Tibial artery (tissue), 4 donors: ENCODE measurements at regions of chr11 and their contacts with region 1.

Region 1: GRCh38 chr11:113896156-113896879 is 8.3 kb upstream of the HTR3B start:
- DNase-seq: peak in 1 of 2 donors; percentile 37
- H3K4me3 ChIP-seq: no peak overlapping the region
- H3K27ac ChIP-seq: no peak overlapping the region
- H3K4me1 ChIP-seq: no peaks in the 10 kb centered on the region
- H3K27me3 ChIP-seq: no peaks in the 10 kb centered on the region
- CTCF ChIP-seq: peak; percentile 61 to 75

Region 2: DNA sequence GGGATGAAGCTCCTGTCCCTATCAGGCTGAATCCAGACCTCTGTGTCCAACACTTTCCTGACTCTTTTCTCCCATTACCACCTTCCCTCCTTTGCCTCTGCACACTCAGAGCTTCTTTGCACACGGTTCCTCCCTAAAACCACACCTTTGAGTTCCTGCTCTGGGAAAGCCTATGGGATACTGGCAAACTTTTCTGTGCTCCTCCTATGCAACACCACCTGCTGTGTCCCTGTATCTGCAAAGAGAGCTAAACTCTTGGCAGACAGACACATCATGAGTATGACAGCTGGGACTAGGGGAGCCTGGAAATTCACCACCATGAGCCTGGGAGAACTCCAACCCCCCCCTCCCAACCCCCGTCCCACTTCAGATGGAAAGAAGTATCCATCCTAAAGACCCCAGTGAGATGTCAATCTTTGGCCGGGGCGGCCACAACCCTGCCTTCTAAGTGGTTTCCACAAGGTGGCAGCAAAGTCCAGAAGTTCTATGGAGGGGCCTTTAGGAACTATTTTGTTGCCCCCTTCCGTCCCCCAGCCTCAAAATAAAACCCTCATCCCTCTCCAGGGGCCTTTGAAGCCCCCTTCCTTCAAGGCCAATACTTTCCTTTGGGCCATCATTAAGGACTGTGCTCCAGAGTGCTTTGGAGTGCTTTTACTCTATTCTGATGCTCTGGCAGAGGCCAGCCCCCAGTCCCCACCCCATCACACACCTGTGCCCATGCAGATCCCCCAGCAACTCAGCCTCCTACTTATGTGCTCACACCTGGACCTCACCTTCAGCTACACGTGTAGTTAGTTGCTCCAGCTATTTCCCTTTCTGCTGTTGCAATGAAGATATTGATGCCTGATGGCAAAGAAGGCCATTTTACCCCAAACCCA is 98.0 kb after region 1 on chr11:
- intact Hi-C with region 1: loop called (anchors 10 kb)
- DNase-seq: no peak
- H3K4me3 ChIP-seq: no peak overlapping the region
- H3K27ac ChIP-seq: no peak overlapping the region
- H3K4me1 ChIP-seq: no peaks in the 10 kb centered on the region
- H3K27me3 ChIP-seq: peaks cover 0 to 40% of the 10 kb centered on the region in 2 donors
- CTCF ChIP-seq: peak; percentile 69 to 71

Region 3: DNA sequence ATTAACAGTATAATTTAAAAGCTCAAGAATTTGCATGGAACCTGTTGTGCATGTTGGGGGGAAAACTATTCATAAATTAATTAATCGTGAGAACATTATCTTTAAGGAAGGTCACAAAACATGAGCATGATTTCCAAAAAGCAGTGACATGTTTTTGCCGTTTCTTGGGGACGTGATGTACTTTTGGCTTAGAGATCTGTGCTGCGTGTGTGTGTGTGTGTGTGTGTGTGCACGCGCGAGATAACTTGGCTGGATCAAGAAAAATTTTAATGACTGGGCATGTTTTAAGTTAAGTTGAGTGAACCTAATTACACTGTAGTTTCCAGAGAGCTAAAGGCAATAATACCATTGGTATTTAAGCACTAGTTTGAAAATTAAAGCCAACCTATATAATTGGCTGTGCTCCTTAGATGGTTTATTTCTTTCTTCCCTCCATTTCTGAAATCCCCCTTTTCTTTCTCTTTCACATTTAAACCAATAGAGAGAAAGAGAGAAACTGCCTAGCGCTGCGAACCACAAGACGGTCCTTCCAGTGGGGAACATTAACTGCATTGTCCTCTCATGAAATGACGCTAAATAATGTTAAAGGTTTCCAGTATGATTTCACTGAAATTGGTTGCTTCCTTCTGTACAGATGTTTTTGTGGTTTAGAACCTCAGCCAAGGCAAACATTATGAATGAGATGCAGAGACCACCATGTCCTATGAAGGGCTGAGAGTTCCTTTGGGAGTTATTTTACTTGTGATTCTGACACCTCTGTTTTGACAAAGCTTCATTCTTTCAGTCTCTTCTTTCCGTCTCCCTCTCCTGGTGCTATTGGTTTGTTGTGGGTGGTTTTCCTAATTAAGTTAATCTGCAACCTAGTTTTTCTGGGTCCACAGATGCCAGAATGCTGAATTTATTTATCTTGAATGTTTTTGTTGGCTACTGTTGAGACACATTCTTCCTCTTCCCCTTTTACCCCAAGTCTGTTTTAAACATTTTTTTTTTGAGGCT is 214.9 kb after region 1 on chr11:
- intact Hi-C with region 1: no loop called
- DNase-seq: peak in 1 of 2 donors; percentile 78
- H3K4me3 ChIP-seq: peak overlapping the region; percentile 8 to 35
- H3K27ac ChIP-seq: peak overlapping the region; percentile 72 to 78
- H3K4me1 ChIP-seq: peaks cover 0 to 100% (median 91%) of the 10 kb centered on the region in 4 donors
- H3K27me3 ChIP-seq: no peaks in the 10 kb centered on the region
- CTCF ChIP-seq: no peak